ENCODE measurements at regions of chr13 and their contacts with region 1.

Region 1: GRCh38 chr13:46603165-46603603 is 50.2 kb downstream of the LRCH1 start:
- DNase-seq: peak; percentile 22 to 48
- ATAC-seq: peak in 1 of 2 experiments; percentile 52; a peak in 2 of 6 replicates
- H3K4me3 ChIP-seq: no peak overlapping the region
- H3K27ac ChIP-seq: peak overlapping the region; percentile 83 to 96; a peak in 5 of 6 replicates
- H3K4me1 ChIP-seq: peaks cover 78% of the 10 kb centered on the region
- CTCF ChIP-seq: peak; percentile 39
- EP300 ChIP-seq: no peak
- POLR2A ChIP-seq: no peak
- RAD21 ChIP-seq: peak; percentile 46 to 49

Region 2: GRCh38 chr13:46592336-46592735 is 10.8 kb before region 1 on chr13:
- CTCF ChIA-PET with region 1: interaction called, 10 read pairs
- POLR2A ChIA-PET with region 1: no interaction called
- DNase-seq: no peak
- ATAC-seq: no peak
- H3K4me3 ChIP-seq: no peak overlapping the region
- H3K27ac ChIP-seq: no peak overlapping the region
- H3K4me1 ChIP-seq: peaks cover 41% of the 10 kb centered on the region
- CTCF ChIP-seq: no peak
- EP300 ChIP-seq: no peak
- POLR2A ChIP-seq: no peak
- RAD21 ChIP-seq: no peak

Region 3: GRCh38 chr13:46810440-46810839 is 207.3 kb after region 1 on chr13:
- CTCF ChIA-PET with region 1: no interaction called
- POLR2A ChIA-PET with region 1: no interaction called
- DNase-seq: no peak
- ATAC-seq: no peak
- H3K4me3 ChIP-seq: no peak overlapping the region
- H3K27ac ChIP-seq: no peak overlapping the region
- H3K4me1 ChIP-seq: no peaks in the 10 kb centered on the region
- CTCF ChIP-seq: no peak
- EP300 ChIP-seq: no peak
- POLR2A ChIP-seq: no peak
- RAD21 ChIP-seq: no peak